ENCODE measurements at regions of chr6 and their contacts with region 1.

Region 1: GRCh38 chr6:157461000-157461915 is 80.3 kb downstream of the ZDHHC14 start:
- DNase-seq: peak; percentile 42
- H3K4me3 Mint-ChIP-seq: peak overlapping the region; percentile 24
- H3K27ac Mint-ChIP-seq: peak overlapping the region; percentile 92
- H3K4me1 Mint-ChIP-seq: peaks cover 63% of the 10 kb centered on the region
- H3K27me3 Mint-ChIP-seq: no peaks in the 10 kb centered on the region

Region 2: DNA sequence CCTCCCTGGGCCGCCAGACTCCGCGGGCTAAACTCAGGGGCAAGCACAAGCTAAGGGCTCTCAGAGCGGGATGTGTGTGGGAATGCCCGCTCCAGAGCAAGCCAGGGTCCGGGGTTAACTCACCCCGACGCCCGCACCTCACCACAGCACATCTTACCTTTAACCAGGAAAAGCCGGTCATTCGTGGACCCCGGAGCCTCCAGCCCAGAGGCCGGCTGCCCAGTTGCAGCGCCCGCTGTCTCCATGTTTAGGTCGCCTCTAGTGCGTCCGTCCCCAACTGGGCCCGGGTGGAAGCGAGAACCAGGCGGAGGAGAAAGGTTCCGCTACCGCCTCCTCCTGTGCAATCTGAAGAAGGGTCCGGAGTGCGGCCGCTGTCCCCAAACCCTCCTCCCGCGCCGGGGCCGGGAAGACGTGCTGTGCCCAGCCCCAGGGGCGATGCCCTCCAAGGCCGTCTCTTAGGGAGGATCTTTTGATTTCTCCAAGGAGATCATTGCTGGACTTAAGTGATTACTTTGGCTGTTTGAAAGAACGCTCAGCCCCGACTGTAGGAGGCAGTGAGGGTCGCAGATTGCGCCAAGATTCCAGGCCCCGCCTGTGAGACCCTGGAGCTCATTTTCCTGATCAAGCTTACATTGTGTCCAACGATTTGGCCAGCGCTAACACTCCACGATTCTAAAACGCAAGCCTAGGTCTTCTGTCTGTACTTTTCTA is 137.8 kb before region 1 on chr6 and contains the start of gene TMEM242:
- intact Hi-C with region 1: loop called (anchors 5 kb)
- DNase-seq: peak; percentile 86
- H3K4me3 Mint-ChIP-seq: peak within 1 kb of the TSS; percentile 93
- H3K27ac Mint-ChIP-seq: peak within 1 kb of the TSS; percentile 80
- H3K4me1 Mint-ChIP-seq: peaks cover 33% of the 10 kb centered on the region
- H3K27me3 Mint-ChIP-seq: peaks cover 13% of the 10 kb centered on the region
- total RNA-seq, gene TMEM242: 11.8 and 11.9 TPM in 2 replicates

Region 3: DNA sequence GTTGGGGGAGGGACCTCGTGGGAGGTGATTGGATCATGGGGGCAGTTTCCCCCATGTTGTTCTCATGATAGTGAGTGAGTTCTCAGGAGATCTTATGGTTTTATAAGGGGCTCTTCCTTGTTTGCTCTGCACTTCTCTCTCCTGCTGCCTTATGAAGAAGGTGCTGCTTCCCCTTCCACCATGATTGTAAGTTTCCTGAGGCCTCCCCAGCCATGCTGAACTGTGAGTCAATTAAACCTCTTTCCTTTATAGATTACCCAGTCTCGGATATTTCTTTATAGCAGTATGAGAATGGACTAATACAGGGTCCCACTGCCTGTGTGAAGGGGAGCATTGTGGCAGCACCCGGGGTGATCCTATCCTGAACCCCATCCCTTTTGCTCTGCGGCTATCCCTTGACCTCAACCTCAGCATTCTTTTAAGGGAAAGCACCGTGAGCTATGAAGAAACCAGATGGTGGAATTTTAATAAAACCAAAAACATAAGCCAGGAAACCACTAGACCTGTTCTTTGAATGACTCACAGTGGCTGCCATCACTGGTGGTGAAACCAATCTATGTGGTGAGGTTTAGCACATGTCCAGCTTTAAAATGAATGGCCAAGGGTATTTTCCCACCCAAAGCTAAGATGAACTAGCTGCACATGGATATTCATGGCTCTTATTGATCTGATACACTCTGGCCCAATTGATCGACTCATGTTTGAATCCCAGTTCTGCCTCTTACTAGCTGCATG is 18.0 kb before region 1 on chr6:
- intact Hi-C with region 1: loop called (anchors 1 kb)
- DNase-seq: no peak
- H3K4me3 Mint-ChIP-seq: no peak overlapping the region
- H3K27ac Mint-ChIP-seq: peak overlapping the region; percentile 87
- H3K4me1 Mint-ChIP-seq: peaks cover 25% of the 10 kb centered on the region
- H3K27me3 Mint-ChIP-seq: no peaks in the 10 kb centered on the region

Region 4: DNA sequence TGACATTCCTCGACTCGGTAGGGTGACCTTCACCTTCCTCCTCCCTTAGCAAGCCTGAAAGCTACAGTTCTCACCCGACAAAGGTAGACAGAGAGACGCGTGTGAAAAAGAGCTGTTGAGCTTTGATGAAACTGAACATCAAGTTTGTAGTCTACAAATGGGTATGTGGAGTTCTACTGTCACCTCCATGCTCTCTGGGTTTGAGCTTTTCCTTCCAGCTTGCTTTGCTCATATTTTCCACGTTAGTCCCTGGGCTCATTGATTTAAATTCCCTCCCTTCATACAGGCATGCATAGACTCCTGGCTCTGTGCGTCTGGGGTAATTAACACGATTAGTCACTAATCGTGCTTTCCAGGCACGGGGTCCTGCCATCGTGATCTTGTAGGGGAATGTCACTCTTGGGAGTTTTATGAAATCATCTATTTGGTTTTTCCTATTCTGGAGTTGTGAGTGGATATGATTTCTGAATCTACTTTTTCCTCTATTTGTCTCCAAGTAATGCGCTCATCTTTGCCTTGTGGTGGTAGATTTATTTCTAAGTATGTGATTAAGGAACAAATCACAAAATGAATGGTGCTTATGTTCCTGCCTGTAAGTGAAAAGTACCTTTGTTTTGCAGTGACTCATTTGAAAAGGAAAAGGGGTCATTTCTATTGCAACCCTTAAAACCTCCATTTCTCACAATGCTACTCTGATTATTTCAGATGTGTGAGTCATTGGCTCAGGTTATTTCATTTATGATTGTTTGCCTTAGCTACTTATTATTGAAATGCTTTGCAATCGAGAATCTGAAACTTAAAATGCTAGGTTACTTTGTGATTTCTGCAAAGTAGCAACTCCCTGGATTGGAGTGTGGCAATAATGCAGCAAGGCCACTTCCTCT is 74.3 kb after region 1 on chr6:
- intact Hi-C with region 1: loop called (anchors 1 kb)
- DNase-seq: peak; percentile 22
- H3K4me3 Mint-ChIP-seq: peak overlapping the region; percentile 0
- H3K27ac Mint-ChIP-seq: peak overlapping the region; percentile 75
- H3K4me1 Mint-ChIP-seq: peaks cover 43% of the 10 kb centered on the region
- H3K27me3 Mint-ChIP-seq: peaks cover 5% of the 10 kb centered on the region

Region 5: DNA sequence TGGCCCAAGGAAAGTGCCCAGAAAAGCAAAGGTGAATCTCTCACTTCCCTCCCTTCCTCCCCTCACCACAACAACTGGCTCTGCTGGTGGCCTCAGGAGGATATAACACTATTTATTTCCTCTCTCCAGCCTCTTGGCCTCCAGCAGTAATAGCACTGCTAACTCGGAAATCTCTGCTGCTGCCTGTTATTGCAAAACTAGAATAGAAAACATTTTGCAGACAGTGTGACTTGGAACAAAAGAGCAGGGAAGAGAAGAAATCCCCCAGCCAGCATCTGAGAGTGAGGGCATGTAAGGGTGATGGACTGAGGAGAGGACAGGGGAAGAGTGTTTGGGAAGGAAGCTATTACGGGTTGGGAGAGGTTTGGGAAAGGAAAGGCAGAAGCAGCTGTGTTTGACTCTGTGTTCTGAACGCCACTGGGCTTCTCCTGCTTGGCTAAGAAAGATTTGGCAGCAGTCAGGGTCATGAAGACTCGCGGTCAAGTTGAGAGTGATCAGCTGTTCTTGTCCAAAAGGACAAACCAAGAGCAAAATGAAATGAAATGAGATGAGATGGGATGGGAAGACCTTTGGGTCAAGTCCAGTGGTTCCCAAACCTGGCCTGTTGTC is 280.8 kb after region 1 on chr6:
- intact Hi-C with region 1: no loop called
- DNase-seq: no peak
- H3K4me3 Mint-ChIP-seq: no peak overlapping the region
- H3K27ac Mint-ChIP-seq: no peak overlapping the region
- H3K4me1 Mint-ChIP-seq: no peaks in the 10 kb centered on the region
- H3K27me3 Mint-ChIP-seq: peaks cover 30% of the 10 kb centered on the region

Region 6: DNA sequence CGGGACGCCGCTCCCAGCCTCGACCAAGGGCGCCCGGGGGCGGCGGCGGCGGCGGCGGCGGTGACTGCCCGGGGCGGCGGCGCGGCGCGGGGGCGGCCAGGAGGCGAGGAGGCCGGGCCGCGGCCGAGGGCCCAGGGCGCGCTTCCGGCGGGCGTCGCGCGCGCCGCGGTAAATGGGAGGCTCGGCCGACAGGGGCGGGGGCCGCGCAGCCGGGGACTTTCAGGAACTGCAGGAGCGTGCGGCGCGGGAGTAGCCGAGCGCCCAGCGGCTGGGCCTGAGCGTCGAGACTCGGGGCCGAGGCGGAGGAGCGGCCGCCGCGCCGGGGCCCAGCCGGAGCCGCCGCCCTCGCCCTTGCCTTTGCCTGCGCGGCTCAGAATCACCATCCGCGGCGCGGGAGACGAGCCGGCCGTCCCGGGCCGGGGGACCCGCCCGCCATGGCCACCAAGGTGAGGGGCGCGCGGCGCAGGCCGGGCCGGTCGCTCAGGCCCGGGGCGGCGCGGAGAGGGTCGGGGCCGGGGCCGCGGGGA is 361.8 kb after region 1 on chr6 and contains the start of gene SNX9:
- intact Hi-C with region 1: loop called (anchors 10 kb)
- DNase-seq: peak; percentile 42
- H3K4me3 Mint-ChIP-seq: peak within 1 kb of the TSS; percentile 92
- H3K27ac Mint-ChIP-seq: peak within 1 kb of the TSS; percentile 96
- H3K4me1 Mint-ChIP-seq: peaks cover 30% of the 10 kb centered on the region
- H3K27me3 Mint-ChIP-seq: peaks cover 35% of the 10 kb centered on the region
- total RNA-seq, gene SNX9: 55.3 and 55.6 TPM in 2 replicates